BJ (cell line): ENCODE measurements at regions of chr21 and their contacts with region 1.

Region 1: GRCh38 chr21:29091032-29091431 is 17.6 kb upstream of the CCT8 start:
- DNase-seq: peak; percentile 61
- H3K4me3 ChIP-seq: no peak overlapping the region
- H3K27me3 ChIP-seq: no peaks in the 10 kb centered on the region
- CTCF ChIP-seq: no peak

Region 2: DNA sequence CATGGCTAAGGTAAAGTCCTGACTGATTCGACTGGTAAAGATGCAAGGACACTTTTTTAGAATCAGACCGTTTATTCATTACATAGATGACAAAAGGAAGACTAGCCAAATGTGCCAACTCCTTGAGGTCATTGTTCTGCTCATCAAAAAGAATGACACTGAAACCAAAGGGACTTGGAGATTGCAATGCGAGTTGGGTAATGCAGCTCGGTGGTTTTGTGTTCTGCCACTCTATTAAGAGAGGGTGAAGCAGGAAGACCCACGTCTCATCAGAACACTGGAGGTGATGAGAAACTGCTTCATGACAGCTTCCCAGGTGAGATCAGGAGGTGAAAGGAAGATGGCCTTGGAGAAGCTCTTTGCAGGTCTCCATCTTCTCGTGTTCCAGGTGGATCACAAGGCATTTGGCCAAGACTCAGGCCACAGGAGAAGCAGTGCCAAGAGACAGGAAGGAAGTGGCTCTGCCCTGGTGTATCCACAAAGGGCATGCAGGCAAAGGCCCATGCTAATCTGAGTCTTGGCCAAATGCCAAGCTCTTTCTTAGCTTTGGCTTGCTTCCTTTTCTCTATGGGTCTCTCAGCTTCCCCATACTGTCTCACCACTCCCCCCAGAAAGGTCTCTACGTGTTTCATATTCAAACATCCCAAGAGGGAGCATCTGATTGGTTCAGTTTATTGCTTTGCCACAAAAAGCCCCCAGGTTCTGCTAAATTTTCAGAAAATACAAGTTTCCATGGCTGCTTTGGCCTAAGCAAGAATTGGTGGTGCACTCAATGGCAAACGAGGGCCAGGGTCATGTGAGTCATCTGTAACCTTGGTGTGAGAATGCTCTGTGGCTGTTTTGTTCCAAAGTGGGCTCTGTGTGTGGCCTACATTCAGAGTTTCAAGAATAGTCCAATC is 11.9 kb before region 1 on chr21:
- CTCF ChIA-PET with region 1: interaction called, 12 read pairs
- POLR2A ChIA-PET with region 1: no interaction called
- DNase-seq: no peak
- H3K4me3 ChIP-seq: no peak overlapping the region
- H3K27me3 ChIP-seq: no peaks in the 10 kb centered on the region
- CTCF ChIP-seq: no peak